B cell (primary cell): ENCODE measurements at regions of chr17 and their contacts with region 1.

Region 1: GRCh38 chr17:48011405-48012150 is 26.0 kb downstream of the COPZ2 start:
- DNase-seq: peak; percentile 61
- ATAC-seq: peak; percentile 67
- H3K4me3 ChIP-seq: peak overlapping the region; percentile 15 to 72 (median 38)
- H3K4me3 Mint-ChIP-seq: peak overlapping the region; percentile 83
- H3K27ac ChIP-seq: no peak overlapping the region
- H3K27ac Mint-ChIP-seq: peak overlapping the region; percentile 32
- H3K4me1 ChIP-seq: peaks cover 14% of the 10 kb centered on the region in 2 donors
- H3K4me1 Mint-ChIP-seq: peaks cover 17% of the 10 kb centered on the region
- H3K27me3 ChIP-seq: peaks cover 0 to 40% (median 19%) of the 10 kb centered on the region in 4 experiments
- H3K27me3 Mint-ChIP-seq: peaks cover 34% of the 10 kb centered on the region
- CTCF ChIP-seq: peak; percentile 52

Region 2: GRCh38 chr17:47872021-47872650 is 139.4 kb before region 1 on chr17:
- CTCF ChIA-PET with region 1: no interaction called
- POLR2A ChIA-PET with region 1: no interaction called
- intact Hi-C with region 1: no loop called
- DNase-seq: no peak
- ATAC-seq: no peak
- H3K4me3 ChIP-seq: no peak overlapping the region
- H3K4me3 Mint-ChIP-seq: no peak overlapping the region
- H3K27ac ChIP-seq: no peak overlapping the region
- H3K27ac Mint-ChIP-seq: no peak overlapping the region
- H3K4me1 ChIP-seq: peaks cover 8 to 9% of the 10 kb centered on the region in 2 donors
- H3K4me1 Mint-ChIP-seq: peaks cover 5% of the 10 kb centered on the region
- H3K27me3 ChIP-seq: peaks cover 0 to 62% (median 23%) of the 10 kb centered on the region in 4 experiments
- H3K27me3 Mint-ChIP-seq: peaks cover 53% of the 10 kb centered on the region
- CTCF ChIP-seq: no peak

Region 3: DNA sequence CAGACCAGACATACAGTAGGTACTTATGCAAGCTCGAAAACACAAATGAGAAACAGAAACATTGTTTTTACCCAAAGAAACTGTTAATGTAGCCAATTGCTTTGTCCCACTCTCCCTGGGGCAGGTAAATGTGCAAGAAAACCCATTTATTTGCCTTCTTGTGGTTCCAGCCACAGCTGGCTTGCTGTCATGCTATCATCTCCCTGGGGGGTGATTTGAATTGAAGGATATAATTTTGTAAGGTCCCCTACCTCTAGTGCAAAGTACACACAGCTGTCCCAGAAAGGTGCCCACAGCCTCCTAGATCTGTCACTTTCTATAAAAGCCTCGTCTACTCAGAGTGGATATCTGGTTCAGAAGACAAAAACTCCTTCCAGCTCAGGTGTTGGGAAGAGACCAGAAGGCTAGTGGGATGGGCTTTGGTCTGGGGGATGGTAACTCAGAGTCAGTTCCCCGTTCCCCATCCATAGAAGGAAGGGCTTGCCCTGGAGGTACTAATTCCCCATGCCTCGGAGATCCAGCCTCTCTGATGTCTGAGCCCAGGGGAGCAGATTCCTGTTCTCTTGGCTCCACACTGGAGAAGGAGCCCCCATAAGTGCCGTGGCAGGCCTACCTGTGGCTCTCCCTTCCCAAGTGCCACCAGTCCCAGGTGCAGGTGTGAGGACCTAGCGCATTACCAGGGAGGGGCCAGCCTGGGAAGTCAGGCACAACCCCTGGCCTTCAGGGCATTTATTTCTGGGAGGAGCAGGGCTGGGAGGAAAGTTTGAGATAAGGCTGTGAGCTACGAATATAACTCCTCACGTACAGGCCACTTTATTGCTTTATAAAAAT is 51.5 kb before region 1 on chr17:
- CTCF ChIA-PET with region 1: no interaction called
- POLR2A ChIA-PET with region 1: no interaction called
- intact Hi-C with region 1: no loop called
- DNase-seq: no peak
- ATAC-seq: no peak
- H3K4me3 ChIP-seq: no peak overlapping the region
- H3K4me3 Mint-ChIP-seq: no peak overlapping the region
- H3K27ac ChIP-seq: no peak overlapping the region
- H3K27ac Mint-ChIP-seq: no peak overlapping the region
- H3K4me1 ChIP-seq: no peaks in the 10 kb centered on the region
- H3K4me1 Mint-ChIP-seq: no peaks in the 10 kb centered on the region
- H3K27me3 ChIP-seq: no peaks in the 10 kb centered on the region
- H3K27me3 Mint-ChIP-seq: no peaks in the 10 kb centered on the region
- CTCF ChIP-seq: no peak

Region 4: DNA sequence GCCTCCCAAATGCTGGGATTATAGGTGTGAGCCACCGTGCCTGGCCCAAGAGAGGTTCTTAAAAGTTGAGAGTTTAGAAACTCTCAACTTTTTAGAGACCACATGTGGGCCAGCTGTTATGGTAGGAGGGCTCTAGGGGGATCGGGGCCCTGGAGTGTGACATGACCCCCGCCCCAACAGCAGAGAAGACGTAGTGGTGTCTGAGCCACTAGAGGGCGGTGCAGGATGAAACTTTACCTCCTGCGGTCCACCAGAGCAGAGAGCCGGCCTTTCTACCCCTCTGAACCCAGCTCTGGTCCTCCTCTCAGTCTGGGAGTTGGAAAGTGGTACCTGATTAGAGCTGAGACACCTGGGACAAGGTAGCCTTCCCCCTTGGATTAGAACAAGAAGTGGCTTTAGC is 33.3 kb before region 1 on chr17:
- CTCF ChIA-PET with region 1: interaction called, 20 read pairs
- POLR2A ChIA-PET with region 1: interaction called, 8 read pairs
- intact Hi-C with region 1: loop called (anchors 2 kb)
- DNase-seq: peak; percentile 67
- ATAC-seq: peak; percentile 88
- H3K4me3 ChIP-seq: no peak overlapping the region
- H3K4me3 Mint-ChIP-seq: no peak overlapping the region
- H3K27ac ChIP-seq: no peak overlapping the region
- H3K27ac Mint-ChIP-seq: no peak overlapping the region
- H3K4me1 ChIP-seq: no peaks in the 10 kb centered on the region
- H3K4me1 Mint-ChIP-seq: peaks cover 2% of the 10 kb centered on the region
- H3K27me3 ChIP-seq: no peaks in the 10 kb centered on the region
- H3K27me3 Mint-ChIP-seq: no peaks in the 10 kb centered on the region
- CTCF ChIP-seq: peak; percentile 77

Region 5: GRCh38 chr17:48198950-48199541 is 187.5 kb after region 1 on chr17:
- CTCF ChIA-PET with region 1: no interaction called
- POLR2A ChIA-PET with region 1: no interaction called
- intact Hi-C with region 1: no loop called
- DNase-seq: no peak
- ATAC-seq: no peak
- H3K4me3 ChIP-seq: no peak overlapping the region
- H3K4me3 Mint-ChIP-seq: no peak overlapping the region
- H3K27ac ChIP-seq: no peak overlapping the region
- H3K27ac Mint-ChIP-seq: no peak overlapping the region
- H3K4me1 ChIP-seq: no peaks in the 10 kb centered on the region
- H3K4me1 Mint-ChIP-seq: peaks cover 8% of the 10 kb centered on the region
- H3K27me3 ChIP-seq: no peaks in the 10 kb centered on the region
- H3K27me3 Mint-ChIP-seq: peaks cover under 1% of the 10 kb centered on the region
- CTCF ChIP-seq: no peak